ENCODE measurements at regions of chr16 and their contacts with region 1.

Region 1: DNA sequence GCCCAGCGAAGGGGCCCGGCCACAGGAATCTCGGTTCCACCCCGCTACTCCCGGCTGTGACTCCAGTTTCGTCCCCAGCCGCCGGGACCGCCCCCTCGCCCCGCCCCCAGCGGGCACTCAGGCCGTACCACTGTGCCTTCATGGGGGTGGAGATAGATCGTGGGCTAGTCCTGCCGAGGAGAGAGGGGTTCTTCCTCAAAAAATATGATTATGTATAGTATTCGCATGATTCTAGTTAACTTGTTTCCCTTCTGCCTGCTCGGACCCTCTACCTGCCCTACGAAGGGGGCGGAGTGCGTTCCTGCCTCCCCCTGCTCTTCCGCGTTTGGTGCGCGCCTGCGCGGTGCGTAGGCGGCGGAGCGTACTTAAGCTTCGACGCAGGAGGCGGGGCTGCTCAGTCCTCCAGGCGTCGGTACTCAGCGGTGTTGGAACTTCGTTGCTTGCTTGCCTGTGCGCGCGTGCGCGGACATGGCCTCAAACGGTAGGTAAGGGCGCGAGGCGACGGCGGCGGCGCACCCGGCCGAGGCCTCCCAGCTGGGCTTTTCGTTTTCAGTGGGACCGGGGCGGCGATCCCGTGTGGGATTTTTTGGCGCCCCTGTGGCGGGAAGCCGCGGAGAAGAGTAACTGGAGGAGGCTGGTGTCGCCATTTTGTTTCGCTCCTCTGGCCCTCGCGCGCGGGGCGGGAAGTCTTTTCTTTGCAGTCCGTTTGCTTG is at the start of gene FUS:
- DNase-seq: peak; percentile 96
- CTCF ChIP-seq: no peak

Region 2: DNA sequence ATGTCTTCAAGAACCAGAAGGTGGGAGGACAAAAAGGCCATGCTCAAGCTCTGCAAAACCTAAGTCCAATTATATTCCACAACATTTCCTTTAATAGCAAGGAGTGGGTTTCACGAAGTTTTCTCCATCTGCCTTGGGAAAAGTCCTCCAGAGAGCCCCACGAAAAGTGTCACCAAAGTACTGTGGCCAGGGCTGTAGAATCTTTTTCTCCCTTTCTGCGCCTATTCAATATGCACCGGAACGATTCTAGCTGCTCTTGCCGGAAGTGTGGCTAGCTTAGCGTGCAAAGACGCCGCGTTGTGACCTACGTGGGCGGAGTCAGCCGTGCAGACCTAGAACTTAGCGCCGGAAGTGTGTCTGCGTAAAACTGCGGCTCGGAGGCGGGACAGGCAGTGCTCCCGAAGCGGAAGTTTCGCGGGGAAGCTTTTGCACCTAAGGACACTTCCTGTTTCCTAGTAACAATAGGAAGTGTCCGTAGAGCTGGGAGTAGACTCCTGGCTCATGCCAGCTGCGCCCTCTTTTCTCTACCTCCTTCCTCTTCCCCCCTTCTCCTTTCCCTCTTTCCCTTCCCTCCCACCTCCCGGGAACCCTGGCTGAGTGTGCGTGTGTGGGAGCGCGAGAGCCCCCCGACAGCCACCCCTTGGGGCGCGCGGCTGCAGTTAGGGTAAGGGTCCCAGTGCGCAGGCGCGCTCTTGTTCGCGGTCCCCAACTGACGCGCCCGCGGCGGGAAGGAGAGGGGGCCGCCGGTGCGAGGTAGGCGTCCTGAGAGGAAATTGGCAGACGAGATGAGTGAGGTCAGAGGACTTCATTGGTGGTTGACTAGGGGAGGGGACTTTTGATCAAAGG is 105.7 kb before region 1 on chr16 and contains the starts of genes ZNF646 and ZNF668:
- CTCF ChIA-PET with region 1: no interaction called
- POLR2A ChIA-PET with region 1: interaction called, 21 read pairs
- DNase-seq: peak; percentile 94
- CTCF ChIP-seq: no peak

Region 3: GRCh38 chr16:31157136-31157535 is 22.8 kb before region 1 on chr16:
- CTCF ChIA-PET with region 1: interaction called, 4 read pairs
- POLR2A ChIA-PET with region 1: interaction called, 11 read pairs
- DNase-seq: peak; percentile 20
- CTCF ChIP-seq: no peak

Region 4: DNA sequence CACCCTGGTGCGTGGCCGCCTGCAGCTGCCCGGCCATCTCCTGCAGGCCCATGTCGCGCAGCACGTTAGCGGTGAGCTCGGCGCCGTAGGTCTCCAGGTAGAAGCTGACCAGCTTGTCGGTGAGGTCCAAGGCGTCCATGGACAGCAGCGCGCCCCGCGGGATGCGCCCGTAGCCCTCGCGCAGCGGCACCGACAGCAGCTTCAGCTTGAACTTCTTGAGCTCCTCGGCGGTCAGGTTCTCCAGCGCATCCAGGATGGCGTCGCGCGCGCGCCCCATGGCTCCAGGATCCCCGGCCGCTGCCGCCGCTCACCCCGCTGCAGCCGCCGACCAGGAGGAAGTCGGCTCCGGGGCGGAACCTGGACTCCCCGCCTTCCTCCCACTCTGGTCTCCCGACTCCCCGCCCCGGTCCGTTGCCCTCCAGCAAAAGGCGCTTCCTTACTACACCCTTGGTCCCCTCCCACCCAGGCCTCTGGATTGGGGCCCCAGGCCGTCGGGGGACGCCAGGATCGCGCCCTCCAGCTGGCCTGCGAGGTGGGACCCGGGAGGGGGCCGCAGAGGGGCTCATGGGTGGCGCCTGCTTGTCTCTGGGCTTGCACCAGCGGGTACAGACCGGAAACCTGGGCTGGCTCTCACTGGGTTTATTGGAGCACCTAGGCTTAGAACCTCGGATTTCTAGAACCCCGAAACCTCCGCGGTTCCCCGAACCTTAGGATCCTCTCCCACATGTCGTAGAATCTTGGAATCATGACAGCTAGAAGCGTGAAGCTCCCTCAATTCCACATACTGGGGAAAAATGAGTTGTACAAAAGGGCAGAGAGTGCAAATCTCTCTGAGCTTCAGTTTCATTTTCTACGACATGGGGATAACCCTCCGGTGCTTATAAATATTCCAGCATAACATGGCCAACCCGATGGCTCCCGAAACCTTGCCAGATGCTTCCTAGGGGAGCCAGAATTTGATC is 22.8 kb after region 1 on chr16 and contains the start of gene PYCARD:
- CTCF ChIA-PET with region 1: no interaction called
- POLR2A ChIA-PET with region 1: interaction called, 11 read pairs
- DNase-seq: peak; percentile 76
- CTCF ChIP-seq: no peak

Region 5: GRCh38 chr16:31365131-31365865 is 185.4 kb after region 1 on chr16:
- CTCF ChIA-PET with region 1: no interaction called
- POLR2A ChIA-PET with region 1: no interaction called
- DNase-seq: peak; percentile 57
- CTCF ChIP-seq: no peak

Region 6: DNA sequence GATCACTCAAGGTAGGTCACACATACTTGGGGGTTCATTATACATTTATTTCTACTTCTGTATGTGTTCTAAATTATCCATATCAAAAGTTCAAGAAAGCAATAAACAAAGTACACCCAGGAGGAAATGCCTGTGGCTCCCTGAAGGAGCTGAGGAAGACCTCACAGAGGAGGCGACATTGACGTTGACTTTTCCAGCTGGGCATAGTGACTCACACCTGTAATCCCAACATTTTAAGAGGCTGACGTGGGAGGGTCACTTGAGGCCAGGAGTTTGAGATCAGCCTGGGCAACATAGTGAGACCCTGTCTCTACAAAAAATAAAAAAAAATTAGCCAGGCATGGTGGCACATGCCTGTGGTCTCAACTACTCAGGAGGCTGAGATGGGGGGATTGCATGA is 229.5 kb after region 1 on chr16:
- CTCF ChIA-PET with region 1: no interaction called
- POLR2A ChIA-PET with region 1: no interaction called
- DNase-seq: no peak
- CTCF ChIP-seq: no peak

Region 7: DNA sequence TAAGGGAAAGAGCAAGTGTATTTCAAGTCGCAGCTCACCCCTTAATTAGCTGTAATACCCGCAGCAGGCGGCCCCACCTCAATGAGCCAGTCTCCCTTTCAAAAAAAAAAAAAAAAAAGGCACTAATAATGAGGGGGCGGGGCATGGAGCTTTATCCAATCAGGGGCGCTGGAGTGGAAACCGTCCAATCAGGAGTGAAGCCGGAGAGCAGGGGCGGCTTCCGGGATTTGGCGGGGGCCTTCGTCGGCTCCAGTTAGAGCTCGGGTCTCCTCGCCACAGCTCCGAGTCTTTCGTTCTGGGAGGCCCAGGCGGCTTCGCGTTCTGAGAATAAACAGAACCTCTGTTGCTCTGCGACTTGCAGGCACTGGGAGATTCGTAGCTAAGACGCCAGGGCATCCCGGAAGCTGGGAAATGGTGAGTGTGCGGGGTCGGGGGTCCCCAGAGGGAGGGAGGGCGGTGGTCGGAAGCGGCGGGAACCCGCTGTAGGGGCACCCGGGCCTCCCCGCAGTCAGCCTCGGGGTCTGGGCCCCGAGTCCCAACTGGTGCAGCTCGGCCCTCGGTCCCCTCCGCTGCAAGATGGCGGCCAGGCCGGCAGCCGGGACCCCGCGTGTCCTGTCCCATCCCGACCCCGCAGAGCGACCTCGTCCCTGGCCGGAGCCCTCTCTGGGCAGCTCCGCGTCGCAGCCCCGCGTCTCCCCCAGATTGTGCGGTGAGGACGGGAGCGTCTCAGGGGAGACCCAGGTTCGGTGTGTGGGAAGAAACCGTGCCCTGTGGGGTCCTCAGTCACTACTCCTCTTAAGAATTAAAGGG is 693.9 kb after region 1 on chr16 and contains the start of gene ZNF267:
- CTCF ChIA-PET with region 1: no interaction called
- POLR2A ChIA-PET with region 1: interaction called, 10 read pairs
- DNase-seq: peak; percentile 88
- CTCF ChIP-seq: no peak

Measured in GM10248 (cell line).